A673 (cell line): ENCODE measurements at regions of chr13 and their contacts with region 1.

Region 1: DNA sequence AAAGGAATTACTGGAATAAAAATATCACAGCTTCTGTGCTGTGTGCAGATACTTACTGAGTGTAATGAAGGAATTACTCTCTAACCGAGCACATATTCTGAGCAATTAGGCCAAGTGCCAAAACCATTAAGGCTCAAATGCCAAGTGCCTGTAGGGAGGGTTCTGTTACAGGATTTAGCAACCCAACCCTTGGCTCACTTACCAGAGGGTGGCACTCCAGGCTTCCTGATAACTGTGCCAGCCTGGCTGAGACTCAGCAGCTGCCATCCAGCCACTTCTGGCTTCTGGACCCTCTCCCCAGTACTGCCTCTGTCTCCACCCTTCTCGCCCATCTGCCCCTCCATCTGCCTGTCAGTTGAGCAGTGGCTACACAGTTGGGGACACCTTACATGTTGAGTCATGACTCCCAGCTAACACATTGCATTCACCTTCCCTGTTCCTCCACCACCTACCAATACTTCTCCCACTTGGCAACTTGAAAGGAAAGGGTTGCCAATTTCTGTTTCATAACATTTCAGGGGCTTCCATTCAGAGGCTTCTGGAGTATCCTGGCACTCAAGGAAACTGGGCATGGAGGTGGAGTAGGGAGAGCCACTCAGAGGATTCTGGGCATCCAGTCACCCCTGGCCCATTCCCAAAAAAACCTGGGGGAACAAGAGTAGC is 110.5 kb downstream of the COG6 start:
- DNase-seq: peak; percentile 80
- H3K4me3 ChIP-seq: no peak overlapping the region
- H3K27ac ChIP-seq: no peak overlapping the region
- H3K4me1 ChIP-seq: peaks cover 33% of the 10 kb centered on the region
- H3K27me3 ChIP-seq: no peaks in the 10 kb centered on the region
- CTCF ChIP-seq: peak; percentile 73

Region 2: DNA sequence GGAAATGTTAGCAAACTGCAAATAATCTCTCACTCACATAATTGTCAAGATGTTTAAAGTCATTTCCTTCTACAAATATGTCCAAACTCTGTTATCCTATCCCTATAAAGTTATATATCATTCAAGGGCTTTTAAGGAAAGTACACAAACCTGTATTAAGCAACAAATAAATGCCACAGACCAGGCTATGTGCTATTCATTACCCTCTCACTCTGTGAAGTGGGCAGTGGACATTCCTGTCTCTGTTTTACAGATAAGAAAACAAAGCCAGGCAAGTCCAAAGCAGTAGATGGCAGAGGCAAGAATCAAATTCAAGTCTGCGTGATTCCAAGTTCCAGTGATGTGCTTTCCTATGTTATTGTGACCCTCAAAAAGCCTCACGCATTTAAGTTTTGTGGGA is 303.5 kb before region 1 on chr13:
- CTCF ChIA-PET with region 1: no interaction called
- POLR2A ChIA-PET with region 1: no interaction called
- intact Hi-C with region 1: no loop called
- DNase-seq: no peak
- H3K4me3 ChIP-seq: no peak overlapping the region
- H3K27ac ChIP-seq: no peak overlapping the region
- H3K4me1 ChIP-seq: peaks cover 40% of the 10 kb centered on the region
- H3K27me3 ChIP-seq: no peaks in the 10 kb centered on the region
- CTCF ChIP-seq: no peak

Region 3: DNA sequence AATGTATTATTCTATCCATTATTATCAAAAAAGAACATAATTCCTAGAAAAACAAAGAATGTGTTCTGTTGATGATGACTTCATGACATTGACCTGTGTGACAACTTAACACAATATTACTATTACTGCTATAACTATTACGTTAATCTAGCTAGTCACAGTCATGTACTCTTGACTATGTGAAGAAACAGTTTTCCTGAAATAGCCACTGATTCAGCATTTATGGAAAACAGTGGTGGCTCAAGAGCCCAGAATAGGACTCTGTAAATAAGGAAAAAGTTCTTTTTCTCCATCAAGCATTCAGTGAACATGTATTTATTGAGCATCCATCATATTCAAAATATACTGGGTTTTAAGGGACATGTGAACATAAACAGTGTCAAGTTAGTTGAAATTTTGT is 17.0 kb before region 1 on chr13:
- CTCF ChIA-PET with region 1: no interaction called
- POLR2A ChIA-PET with region 1: no interaction called
- intact Hi-C with region 1: no loop called
- DNase-seq: no peak
- H3K4me3 ChIP-seq: no peak overlapping the region
- H3K27ac ChIP-seq: no peak overlapping the region
- H3K4me1 ChIP-seq: no peaks in the 10 kb centered on the region
- H3K27me3 ChIP-seq: no peaks in the 10 kb centered on the region
- CTCF ChIP-seq: no peak

Region 4: DNA sequence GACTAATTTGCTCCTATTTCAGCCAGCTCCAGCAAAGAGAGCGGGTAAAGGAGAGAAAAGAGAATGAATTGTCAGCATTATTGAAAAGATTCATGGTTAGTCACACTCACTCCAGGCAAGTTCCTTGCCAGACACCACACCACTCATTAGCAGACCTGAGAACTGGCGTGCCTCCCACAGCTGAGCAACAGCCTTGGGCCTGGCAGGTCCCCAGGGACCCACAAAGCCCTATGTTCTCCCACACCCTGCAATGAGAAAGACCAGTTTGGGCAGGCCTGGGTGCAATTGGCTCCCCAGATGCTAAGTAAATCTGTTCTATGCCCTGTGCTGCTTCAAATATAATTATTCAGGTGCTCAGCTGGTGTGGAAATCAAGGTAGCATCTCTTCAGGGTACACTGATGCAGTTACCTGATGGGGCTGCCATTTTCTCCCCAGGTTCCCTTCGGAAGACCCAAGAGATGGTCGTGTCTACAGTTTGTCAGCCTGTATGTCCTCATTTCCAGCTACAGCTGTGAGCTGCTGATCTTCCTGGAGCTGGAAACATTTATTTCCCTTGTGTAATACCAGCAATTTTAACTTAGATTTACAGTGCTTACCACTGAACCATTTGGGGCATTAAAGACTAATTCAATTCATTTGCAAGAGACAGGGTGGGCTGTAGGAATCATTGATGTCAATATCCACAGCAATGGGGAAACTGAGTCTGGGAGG is 294.5 kb after region 1 on chr13:
- CTCF ChIA-PET with region 1: no interaction called
- POLR2A ChIA-PET with region 1: no interaction called
- intact Hi-C with region 1: loop called (anchors 5 kb)
- DNase-seq: peak; percentile 87
- H3K4me3 ChIP-seq: no peak overlapping the region
- H3K27ac ChIP-seq: no peak overlapping the region
- H3K4me1 ChIP-seq: peaks cover 50% of the 10 kb centered on the region
- H3K27me3 ChIP-seq: no peaks in the 10 kb centered on the region
- CTCF ChIP-seq: no peak

Region 5: DNA sequence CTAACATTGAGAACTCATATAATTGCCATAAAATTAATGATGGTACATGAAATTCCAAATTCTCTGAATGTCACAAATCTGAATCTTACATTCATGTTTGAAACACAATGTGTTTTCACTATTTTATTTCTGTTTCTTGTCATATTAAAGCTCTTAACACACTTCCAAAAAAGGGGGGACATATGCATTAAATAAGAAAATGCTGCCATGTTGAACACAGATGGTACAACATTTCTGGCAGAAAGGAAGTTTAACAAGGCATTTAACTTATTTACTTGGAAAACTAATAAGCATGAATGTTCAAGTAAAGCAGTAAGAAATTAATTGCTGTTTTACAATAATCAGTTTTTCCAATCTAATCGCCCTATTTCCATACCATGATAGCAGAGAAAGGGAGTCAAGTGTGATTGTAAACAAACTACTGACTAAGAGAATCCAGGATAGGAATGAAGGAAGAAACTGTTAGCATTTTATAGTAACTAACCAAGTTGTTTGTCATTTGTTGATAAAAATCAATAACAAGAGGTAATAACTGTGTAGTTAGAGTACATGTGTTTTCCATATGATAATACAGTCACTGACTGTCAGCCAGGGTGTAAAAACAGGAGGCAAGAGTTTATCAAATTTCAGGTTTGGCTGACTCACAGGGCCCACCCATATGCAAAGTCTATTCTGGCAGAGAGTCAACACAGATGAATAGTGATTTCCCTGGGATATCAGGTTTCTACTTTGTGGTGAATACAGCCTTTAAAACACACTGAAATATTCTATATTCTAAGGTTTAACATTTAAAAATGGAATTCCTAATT is 906.2 kb after region 1 on chr13:
- CTCF ChIA-PET with region 1: no interaction called
- POLR2A ChIA-PET with region 1: no interaction called
- intact Hi-C with region 1: loop called (anchors 5 kb)
- DNase-seq: peak; percentile 82
- H3K4me3 ChIP-seq: no peak overlapping the region
- H3K27ac ChIP-seq: no peak overlapping the region
- H3K4me1 ChIP-seq: peaks cover 15% of the 10 kb centered on the region
- H3K27me3 ChIP-seq: no peaks in the 10 kb centered on the region
- CTCF ChIP-seq: no peak

Region 6: GRCh38 chr13:40777166-40777808 is 1011.4 kb after region 1 on chr13:
- CTCF ChIA-PET with region 1: interaction called, 3 read pairs
- POLR2A ChIA-PET with region 1: no interaction called
- intact Hi-C with region 1: loop called (anchors 5 kb)
- DNase-seq: peak; percentile 75
- H3K4me3 ChIP-seq: peak overlapping the region; percentile 24
- H3K27ac ChIP-seq: no peak overlapping the region
- H3K4me1 ChIP-seq: peaks cover 6% of the 10 kb centered on the region
- H3K27me3 ChIP-seq: no peaks in the 10 kb centered on the region
- CTCF ChIP-seq: peak; percentile 75